CD8-positive, alpha-beta T cell (primary cell): ENCODE measurements at regions of chr22 and their contacts with region 1.

Region 1: DNA sequence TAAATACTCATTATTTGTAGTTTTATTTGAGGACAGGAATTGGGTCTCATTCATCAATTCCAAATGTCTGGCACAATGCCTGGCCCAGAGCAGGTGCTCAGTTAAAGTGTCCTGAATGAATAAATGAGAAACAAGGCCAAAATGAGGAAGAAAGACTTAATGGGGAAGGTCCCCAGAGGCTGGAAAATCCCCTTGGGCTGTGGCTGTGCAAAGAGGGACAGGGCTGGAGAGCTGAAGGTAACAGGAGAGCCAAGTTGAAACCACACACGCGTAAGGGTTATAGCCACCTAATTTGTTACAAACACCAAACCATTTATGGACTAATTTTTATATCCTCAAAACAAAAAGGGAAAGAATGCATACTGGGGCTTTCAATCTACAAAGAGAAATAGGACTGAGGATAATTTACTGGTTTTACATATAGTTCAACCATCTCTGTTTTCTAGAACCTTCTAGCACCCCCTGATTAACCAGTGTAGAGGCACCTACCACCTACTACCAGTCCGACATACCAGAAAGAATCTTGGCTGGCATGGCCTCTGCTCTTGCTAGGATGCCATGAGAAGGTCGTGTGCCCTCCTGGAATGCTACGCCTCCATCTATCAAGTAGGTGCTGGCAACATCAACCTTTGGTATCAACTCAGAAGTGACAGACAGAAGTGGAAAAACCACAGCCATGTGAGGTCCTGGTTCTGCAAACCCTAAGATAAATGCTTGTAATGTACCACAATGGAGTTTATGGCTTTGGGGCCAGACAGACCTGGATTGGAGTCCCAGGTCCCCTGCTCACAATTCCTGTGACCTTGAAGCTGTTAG is 28.4 kb downstream of the MYH9 start:
- DNase-seq: peak in 2 of 9 experiments; percentile 62 to 75
- ATAC-seq: no peak
- H3K4me3 ChIP-seq: no peak overlapping the region
- H3K4me3 Mint-ChIP-seq: peak overlapping the region; percentile 67
- H3K27ac ChIP-seq: peak overlapping the region in 1 of 2 experiments; percentile 77
- H3K27ac Mint-ChIP-seq: peak overlapping the region; percentile 92
- H3K4me1 ChIP-seq: peaks cover 97% of the 10 kb centered on the region
- H3K4me1 Mint-ChIP-seq: peaks cover 95% of the 10 kb centered on the region
- H3K27me3 ChIP-seq: no peaks in the 10 kb centered on the region
- H3K27me3 Mint-ChIP-seq: no peaks in the 10 kb centered on the region
- CTCF ChIP-seq: no peak

Region 2: GRCh38 chr22:36286471-36287224 is 72.7 kb before region 1 on chr22:
- CTCF ChIA-PET with region 1: no interaction called
- POLR2A ChIA-PET with region 1: no interaction called
- intact Hi-C with region 1: no loop called
- DNase-seq: peak; percentile 38 to 81 (median 70)
- ATAC-seq: peak; percentile 71
- H3K4me3 ChIP-seq: no peak overlapping the region
- H3K4me3 Mint-ChIP-seq: no peak overlapping the region
- H3K27ac ChIP-seq: peak overlapping the region; percentile 10 to 26
- H3K27ac Mint-ChIP-seq: peak overlapping the region; percentile 82
- H3K4me1 ChIP-seq: peaks cover 35% of the 10 kb centered on the region
- H3K4me1 Mint-ChIP-seq: peaks cover 33% of the 10 kb centered on the region
- H3K27me3 ChIP-seq: no peaks in the 10 kb centered on the region
- H3K27me3 Mint-ChIP-seq: no peaks in the 10 kb centered on the region
- CTCF ChIP-seq: peak; percentile 84

Region 3: DNA sequence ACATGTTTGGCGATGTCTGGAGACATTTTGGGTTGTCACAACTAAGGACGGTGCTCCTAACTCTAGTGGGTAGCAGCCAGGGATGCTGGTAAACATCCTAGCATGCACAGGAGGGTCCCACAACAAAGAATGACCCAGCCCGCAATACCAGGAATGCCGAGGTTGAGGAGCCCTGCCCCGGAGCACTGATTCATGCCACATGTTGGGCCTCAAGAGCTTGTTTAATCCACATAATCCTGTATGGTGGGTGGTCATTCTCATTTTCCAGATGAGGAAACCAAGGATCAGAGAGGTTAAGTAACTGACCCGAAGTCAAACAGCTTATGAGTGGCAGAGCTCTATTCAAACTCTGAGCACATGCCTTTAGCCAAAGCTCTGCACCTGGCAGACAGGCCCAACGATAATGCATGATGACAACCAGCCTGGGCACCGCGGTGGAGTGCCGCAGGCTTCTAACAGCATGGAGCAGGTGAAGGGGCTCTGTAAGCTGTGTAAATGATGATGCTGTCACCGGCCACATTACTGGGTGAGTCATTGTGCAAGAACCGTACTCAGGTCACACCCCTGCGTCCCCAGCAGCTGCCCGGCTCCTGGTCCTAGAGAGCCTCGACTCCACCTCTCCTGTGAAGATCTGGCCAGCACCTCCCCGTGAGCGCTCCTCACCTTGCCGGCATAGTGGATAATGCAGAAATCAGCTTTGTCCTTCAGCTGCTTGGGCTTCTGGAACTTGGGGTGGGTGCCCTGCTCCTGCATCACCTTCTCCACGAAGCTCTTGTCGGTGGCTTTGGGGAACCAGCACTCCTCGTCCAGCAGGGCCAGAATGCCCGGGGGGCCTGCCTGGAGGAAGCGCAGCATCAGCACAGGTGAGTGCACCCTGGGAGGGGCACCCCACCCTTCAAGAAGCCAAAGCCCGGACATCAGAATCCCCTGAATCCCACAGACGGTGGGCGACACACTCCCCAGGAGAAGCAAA is 47.7 kb before region 1 on chr22:
- CTCF ChIA-PET with region 1: no interaction called
- POLR2A ChIA-PET with region 1: no interaction called
- intact Hi-C with region 1: no loop called
- DNase-seq: no peak
- ATAC-seq: no peak
- H3K4me3 ChIP-seq: no peak overlapping the region
- H3K4me3 Mint-ChIP-seq: no peak overlapping the region
- H3K27ac ChIP-seq: no peak overlapping the region
- H3K27ac Mint-ChIP-seq: no peak overlapping the region
- H3K4me1 ChIP-seq: no peaks in the 10 kb centered on the region
- H3K4me1 Mint-ChIP-seq: peaks cover 3% of the 10 kb centered on the region
- H3K27me3 ChIP-seq: no peaks in the 10 kb centered on the region
- H3K27me3 Mint-ChIP-seq: no peaks in the 10 kb centered on the region
- CTCF ChIP-seq: no peak

Region 4: GRCh38 chr22:36369922-36370791 is 10.8 kb after region 1 on chr22:
- CTCF ChIA-PET with region 1: interaction called, 8 read pairs
- POLR2A ChIA-PET with region 1: interaction called, 19 read pairs
- intact Hi-C with region 1: loop called in 1 of 2 experiments (anchors 2 kb)
- DNase-seq: peak in 3 of 9 experiments; percentile 41 to 65 (median 49)
- ATAC-seq: peak; percentile 30
- H3K4me3 ChIP-seq: peak overlapping the region; percentile 28 to 48
- H3K4me3 Mint-ChIP-seq: peak overlapping the region; percentile 82
- H3K27ac ChIP-seq: peak overlapping the region; percentile 55 to 85
- H3K27ac Mint-ChIP-seq: peak overlapping the region; percentile 95
- H3K4me1 ChIP-seq: peaks cover 100% of the 10 kb centered on the region
- H3K4me1 Mint-ChIP-seq: peaks cover 92% of the 10 kb centered on the region
- H3K27me3 ChIP-seq: no peaks in the 10 kb centered on the region
- H3K27me3 Mint-ChIP-seq: no peaks in the 10 kb centered on the region
- CTCF ChIP-seq: no peak

Region 5: DNA sequence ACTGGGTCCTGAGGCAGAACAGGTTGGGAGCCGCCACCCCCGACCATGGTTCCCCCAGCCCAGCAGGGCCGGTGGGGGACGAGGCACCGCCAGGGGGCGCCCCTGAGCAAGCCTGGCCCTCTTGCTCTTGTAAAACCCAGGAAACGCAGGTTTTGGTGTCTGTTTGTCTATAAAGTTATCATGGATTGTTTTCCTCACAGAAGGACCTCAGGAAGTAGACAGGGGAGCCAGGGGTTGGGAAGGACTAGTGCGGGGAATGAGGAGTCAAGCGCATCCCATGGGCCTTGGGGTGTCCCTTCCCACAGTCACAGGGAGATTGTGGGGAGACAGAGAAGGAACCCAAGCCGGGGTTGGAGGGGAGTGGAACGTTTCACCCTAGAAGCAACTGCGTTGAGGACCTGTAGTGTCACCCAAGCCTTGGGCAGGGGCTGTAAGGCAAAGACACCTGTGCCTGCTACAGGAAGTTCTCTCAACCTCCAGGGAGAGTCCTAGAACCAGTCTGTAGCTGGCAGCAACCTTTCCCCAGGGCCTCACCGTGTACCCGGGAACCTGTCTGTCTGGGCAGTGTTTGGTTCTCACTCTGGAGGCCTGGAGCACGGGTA is 718.6 kb after region 1 on chr22:
- CTCF ChIA-PET with region 1: no interaction called
- POLR2A ChIA-PET with region 1: no interaction called
- intact Hi-C with region 1: no loop called
- DNase-seq: peak; percentile 68 to 93 (median 83)
- ATAC-seq: peak; percentile 14
- H3K4me3 ChIP-seq: no peak overlapping the region
- H3K4me3 Mint-ChIP-seq: peak overlapping the region; percentile 47
- H3K27ac ChIP-seq: peak overlapping the region in 1 of 2 experiments; percentile 51
- H3K27ac Mint-ChIP-seq: peak overlapping the region; percentile 99
- H3K4me1 ChIP-seq: peaks cover 39% of the 10 kb centered on the region
- H3K4me1 Mint-ChIP-seq: peaks cover 31% of the 10 kb centered on the region
- H3K27me3 ChIP-seq: no peaks in the 10 kb centered on the region
- H3K27me3 Mint-ChIP-seq: peaks cover 3% of the 10 kb centered on the region
- CTCF ChIP-seq: peak; percentile 98